ENCODE measurements at regions of chr16 and their contacts with region 1.

Region 1: GRCh38 chr16:53045341-53046220 is 7.1 kb downstream of the CHD9NB start:
- DNase-seq: no peak
- ATAC-seq: no peak
- H3K4me3 ChIP-seq: no peak overlapping the region
- H3K4me3 Mint-ChIP-seq: no peak overlapping the region
- H3K27ac ChIP-seq: no peak overlapping the region
- H3K27ac Mint-ChIP-seq: no peak overlapping the region
- H3K4me1 ChIP-seq: no peaks in the 10 kb centered on the region
- H3K4me1 Mint-ChIP-seq: peaks cover 0 to 1% (median 0%) of the 10 kb centered on the region in 3 donors
- H3K27me3 ChIP-seq: peaks cover 0 to 12% of the 10 kb centered on the region in 2 experiments
- H3K27me3 Mint-ChIP-seq: peaks cover 0 to 29% of the 10 kb centered on the region in 2 donors

Region 2: DNA sequence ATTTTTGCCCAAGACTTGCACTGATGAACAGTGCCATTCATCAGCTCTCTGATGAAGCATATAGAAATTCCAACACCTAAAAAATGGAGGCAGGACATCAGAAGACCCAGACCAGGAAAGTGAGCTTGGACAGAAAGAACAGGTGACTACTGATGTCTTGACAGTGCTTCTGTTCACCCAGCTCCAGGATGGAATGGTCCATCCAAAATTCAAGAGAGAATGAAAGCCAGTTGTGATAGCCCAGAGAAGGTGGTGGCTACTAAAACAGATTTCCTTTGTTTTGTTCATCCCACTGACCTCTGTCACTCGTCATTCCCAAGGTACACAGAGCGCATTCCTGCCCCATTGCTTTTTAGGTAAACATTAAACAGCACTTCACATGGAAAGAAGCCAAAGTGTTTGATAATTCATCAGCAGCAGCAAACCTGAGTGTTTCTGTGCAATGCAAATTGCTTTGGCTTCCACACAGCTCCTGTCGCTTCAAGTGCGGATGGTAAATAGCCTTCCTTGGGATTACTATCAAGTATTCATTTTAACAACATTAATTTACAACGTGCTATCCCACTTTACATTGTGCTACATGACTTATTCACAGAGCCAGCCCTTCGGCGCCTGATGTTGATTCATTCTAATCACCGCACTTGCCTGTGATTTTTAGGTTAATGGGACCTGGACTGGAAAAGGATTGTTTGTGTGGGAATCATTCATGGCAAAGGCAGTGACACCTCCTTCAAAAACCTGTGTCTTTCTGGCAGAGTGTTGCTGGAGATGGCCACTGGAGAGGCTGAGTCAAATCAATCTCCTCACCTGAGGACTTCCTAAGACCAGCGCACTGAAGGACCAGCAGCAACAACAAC is 433.5 kb before region 1 on chr16:
- CTCF ChIA-PET with region 1: no interaction called
- POLR2A ChIA-PET with region 1: interaction called in 1 of 2 experiments, 10 read pairs
- DNase-seq: no peak
- ATAC-seq: no peak
- H3K4me3 ChIP-seq: no peak overlapping the region
- H3K4me3 Mint-ChIP-seq: no peak overlapping the region
- H3K27ac ChIP-seq: no peak overlapping the region
- H3K27ac Mint-ChIP-seq: no peak overlapping the region
- H3K4me1 ChIP-seq: no peaks in the 10 kb centered on the region
- H3K4me1 Mint-ChIP-seq: no peaks in the 10 kb centered on the region
- H3K27me3 ChIP-seq: no peaks in the 10 kb centered on the region
- H3K27me3 Mint-ChIP-seq: no peaks in the 10 kb centered on the region

Measured in T-cell (primary cell).